Activated CD4-positive, alpha-beta memory T cell treated with anti-CD3 and anti-CD28 coated beads, Interleukin-2, amount 10 ng/mL, durations not matched to agents 7 days and 5 days (primary cell): ENCODE measurements at regions of chr10 and their contacts with region 1.

Region 1: GRCh38 chr10:113982769-113983168 is 60.9 kb upstream of the ADRB1 start:
- DNase-seq: no peak
- H3K4me3 Mint-ChIP-seq: no peak overlapping the region
- H3K27ac Mint-ChIP-seq: no peak overlapping the region
- H3K4me1 Mint-ChIP-seq: peaks cover 10% of the 10 kb centered on the region
- H3K27me3 Mint-ChIP-seq: peaks cover 21% of the 10 kb centered on the region

Region 2: DNA sequence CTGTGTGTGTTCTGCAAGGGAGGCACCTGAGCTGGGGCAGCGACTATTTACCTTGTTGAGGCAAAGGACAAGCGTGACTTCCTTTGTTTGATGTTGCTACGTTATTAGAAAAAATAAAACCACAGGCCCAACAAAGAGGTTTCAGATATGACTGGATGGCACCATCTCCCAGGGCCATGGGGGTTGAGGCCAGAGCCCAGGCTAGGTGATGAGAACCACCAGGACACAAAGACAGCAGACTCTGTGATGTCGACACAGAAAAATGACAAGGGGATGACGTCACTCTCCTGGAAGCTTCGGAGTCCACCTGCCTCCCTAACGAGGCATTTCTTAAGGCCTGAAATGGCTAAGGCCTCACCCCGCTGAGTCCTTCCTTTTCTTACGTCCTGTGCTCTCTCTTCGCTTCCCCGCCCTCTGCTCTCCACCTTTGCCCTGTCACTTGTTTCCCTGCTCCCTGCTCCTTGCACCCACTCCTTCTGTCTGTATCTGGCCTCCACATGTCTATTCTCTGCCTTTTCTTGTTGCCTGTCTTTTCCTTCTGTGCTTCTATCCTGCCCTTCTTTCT is 22.1 kb before region 1 on chr10:
- CTCF ChIA-PET with region 1: interaction called, 3 read pairs
- POLR2A ChIA-PET with region 1: interaction called, 10 read pairs
- DNase-seq: peak; percentile 69
- H3K4me3 Mint-ChIP-seq: peak overlapping the region; percentile 49
- H3K27ac Mint-ChIP-seq: peak overlapping the region; percentile 90
- H3K4me1 Mint-ChIP-seq: peaks cover 48% of the 10 kb centered on the region
- H3K27me3 Mint-ChIP-seq: peaks cover 2% of the 10 kb centered on the region

Region 3: GRCh38 chr10:113971349-113971973 is 11.3 kb before region 1 on chr10:
- CTCF ChIA-PET with region 1: no interaction called
- POLR2A ChIA-PET with region 1: no interaction called
- DNase-seq: no peak
- H3K4me3 Mint-ChIP-seq: no peak overlapping the region
- H3K27ac Mint-ChIP-seq: no peak overlapping the region
- H3K4me1 Mint-ChIP-seq: no peaks in the 10 kb centered on the region
- H3K27me3 Mint-ChIP-seq: peaks cover 25% of the 10 kb centered on the region